ENCODE measurements at regions of chr4 and their contacts with region 1.

Region 1: DNA sequence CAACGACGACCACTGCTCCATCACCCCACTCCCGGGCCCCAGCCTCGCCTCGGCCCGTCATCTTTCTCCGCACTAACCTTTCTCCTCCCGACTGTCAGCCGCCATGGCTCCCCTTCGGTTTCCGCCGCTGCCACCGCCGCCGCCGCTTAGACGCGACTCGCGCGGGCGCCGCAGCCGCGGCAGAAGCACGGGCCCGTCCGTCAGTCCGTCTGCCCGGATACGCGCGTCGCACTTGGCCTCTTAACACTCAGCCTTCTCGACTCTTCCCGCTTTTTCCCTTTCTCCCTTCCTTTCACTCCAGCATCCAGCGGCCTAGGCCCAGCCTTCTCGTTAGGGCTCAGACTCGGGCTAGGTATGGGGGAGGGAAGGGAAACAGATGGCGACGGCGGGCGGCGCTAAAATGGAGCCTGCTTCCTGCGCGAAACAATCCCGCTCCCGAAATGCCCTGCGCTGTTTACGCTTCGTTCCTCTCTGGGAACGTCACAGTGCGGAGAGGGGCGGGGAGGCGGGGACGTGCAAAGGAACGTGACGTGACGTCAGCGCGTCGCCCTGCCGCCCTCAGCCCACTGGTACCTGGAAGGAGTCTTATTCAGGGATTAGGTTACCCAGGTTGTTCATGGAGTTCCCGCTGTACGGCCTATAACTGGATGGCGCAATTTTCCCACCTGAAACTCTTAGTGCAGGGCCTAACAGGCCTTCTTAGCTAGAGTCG is at the start of gene YTHDC1:
- DNase-seq: peak; percentile 89 to 99 (median 95)
- ATAC-seq: peak; percentile 94
- H3K4me3 ChIP-seq: peak within 1 kb of the TSS; percentile 87
- H3K4me3 Mint-ChIP-seq: peak within 1 kb of the TSS; percentile 99
- H3K27ac ChIP-seq: peak within 1 kb of the TSS; percentile 86 to 98
- H3K27ac Mint-ChIP-seq: peak within 1 kb of the TSS; percentile 100
- H3K4me1 ChIP-seq: peaks cover 18% of the 10 kb centered on the region
- H3K4me1 Mint-ChIP-seq: peaks cover 49% of the 10 kb centered on the region
- H3K27me3 ChIP-seq: no peaks in the 10 kb centered on the region
- H3K27me3 Mint-ChIP-seq: no peaks in the 10 kb centered on the region
- CTCF ChIP-seq: no peak
- total RNA-seq, gene YTHDC1: 383 to 389 TPM

Region 2: DNA sequence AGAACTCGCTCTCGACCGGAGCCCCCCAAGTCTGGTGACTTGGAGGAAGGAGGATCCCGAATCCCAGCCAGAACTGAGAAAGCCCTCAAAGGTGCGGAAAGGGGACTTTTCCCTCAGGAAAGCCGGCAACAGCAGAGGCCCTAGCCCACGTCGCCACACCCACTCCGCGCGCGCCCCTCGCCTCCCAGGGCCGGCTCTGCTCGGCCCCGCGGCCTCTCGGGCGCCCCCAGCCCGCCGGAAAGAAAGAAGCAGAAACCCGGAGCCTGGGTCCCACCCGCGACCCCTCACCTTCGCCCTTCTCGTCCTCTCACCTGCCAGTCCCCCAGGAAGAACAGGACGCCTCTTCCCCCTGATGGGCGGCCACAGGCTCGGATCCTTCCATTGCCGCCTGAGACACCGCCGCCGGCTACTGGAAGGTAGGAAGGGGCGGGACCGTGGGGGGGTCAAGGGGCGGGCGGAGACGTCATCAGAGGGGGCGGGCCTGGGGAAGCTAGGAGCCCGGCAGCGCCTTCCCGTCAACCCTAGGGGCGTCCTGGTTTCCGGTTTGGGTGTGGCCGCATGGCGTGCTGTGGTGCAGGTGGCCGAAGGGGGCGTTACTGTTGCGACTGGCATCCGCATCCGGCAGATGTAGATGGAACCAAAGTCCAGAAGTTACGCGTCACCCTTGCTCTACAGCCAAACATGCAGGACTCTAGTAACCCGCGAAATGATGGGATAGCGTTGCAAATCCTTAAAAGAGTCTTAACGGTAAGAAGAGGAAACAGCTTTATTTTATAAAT is 648.9 kb before region 1 on chr4 and contains the start of gene UBA6:
- CTCF ChIA-PET with region 1: no interaction called
- POLR2A ChIA-PET with region 1: no interaction called
- intact Hi-C with region 1: loop called in 1 of 2 experiments (anchors 5 kb)
- DNase-seq: peak; percentile 89 to 97 (median 93)
- ATAC-seq: peak; percentile 96
- H3K4me3 ChIP-seq: peak within 1 kb of the TSS; percentile 92
- H3K4me3 Mint-ChIP-seq: peak within 1 kb of the TSS; percentile 97
- H3K27ac ChIP-seq: peak within 1 kb of the TSS; percentile 66 to 85
- H3K27ac Mint-ChIP-seq: peak within 1 kb of the TSS; percentile 93
- H3K4me1 ChIP-seq: peaks cover 15% of the 10 kb centered on the region
- H3K4me1 Mint-ChIP-seq: peaks cover 74% of the 10 kb centered on the region
- H3K27me3 ChIP-seq: no peaks in the 10 kb centered on the region
- H3K27me3 Mint-ChIP-seq: no peaks in the 10 kb centered on the region
- CTCF ChIP-seq: peak; percentile 62
- total RNA-seq, gene UBA6: 33.4 to 45.5 TPM

Region 3: GRCh38 chr4:68310651-68311247 is 39.1 kb before region 1 on chr4:
- CTCF ChIA-PET with region 1: no interaction called
- POLR2A ChIA-PET with region 1: no interaction called
- intact Hi-C with region 1: loop called (anchors 5 kb)
- DNase-seq: no peak
- ATAC-seq: no peak
- H3K4me3 ChIP-seq: no peak overlapping the region
- H3K4me3 Mint-ChIP-seq: no peak overlapping the region
- H3K27ac ChIP-seq: no peak overlapping the region
- H3K27ac Mint-ChIP-seq: no peak overlapping the region
- H3K4me1 ChIP-seq: no peaks in the 10 kb centered on the region
- H3K4me1 Mint-ChIP-seq: no peaks in the 10 kb centered on the region
- H3K27me3 ChIP-seq: no peaks in the 10 kb centered on the region
- H3K27me3 Mint-ChIP-seq: no peaks in the 10 kb centered on the region
- CTCF ChIP-seq: no peak

Region 4: GRCh38 chr4:68324519-68325262 is 25.1 kb before region 1 on chr4:
- CTCF ChIA-PET with region 1: no interaction called
- POLR2A ChIA-PET with region 1: no interaction called
- intact Hi-C with region 1: loop called in 1 of 2 experiments (anchors 2 kb)
- DNase-seq: no peak
- ATAC-seq: no peak
- H3K4me3 ChIP-seq: no peak overlapping the region
- H3K4me3 Mint-ChIP-seq: no peak overlapping the region
- H3K27ac ChIP-seq: no peak overlapping the region
- H3K27ac Mint-ChIP-seq: peak overlapping the region; percentile 21
- H3K4me1 ChIP-seq: no peaks in the 10 kb centered on the region
- H3K4me1 Mint-ChIP-seq: peaks cover 5% of the 10 kb centered on the region
- H3K27me3 ChIP-seq: no peaks in the 10 kb centered on the region
- H3K27me3 Mint-ChIP-seq: no peaks in the 10 kb centered on the region
- CTCF ChIP-seq: no peak

Measured in CD4-positive, alpha-beta T cell (primary cell).